ENCODE measurements at regions of chr2 and their contacts with region 1.

Region 1: DNA sequence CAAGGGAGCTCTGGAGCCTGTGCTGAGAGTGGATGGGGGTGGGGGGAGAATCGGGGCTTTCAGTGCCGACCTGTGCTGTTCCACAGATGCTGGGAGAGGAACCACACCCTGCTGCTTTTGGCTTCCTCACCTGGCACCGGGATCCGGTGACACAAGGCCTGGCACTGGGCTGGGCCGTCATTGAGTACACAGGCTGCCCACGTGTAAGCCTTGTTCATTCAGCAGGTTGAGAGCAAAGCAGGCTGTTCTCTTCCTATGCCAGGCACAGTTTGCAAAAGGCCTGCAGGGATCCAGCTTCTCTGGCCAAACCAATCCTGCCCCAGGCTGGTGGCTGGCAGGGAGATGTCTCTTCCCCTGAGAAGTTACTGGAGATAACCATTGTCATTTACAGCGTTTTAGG is 17.1 kb downstream of the TRIB2 start:
- DNase-seq: no peak

Region 2: GRCh38 chr2:12824351-12824777 is 90.5 kb after region 1 on chr2:
- intact Hi-C with region 1: loop called (anchors 5 kb)
- DNase-seq: no peak